ENCODE measurements at regions of chr1 and their contacts with region 1.

Region 1: DNA sequence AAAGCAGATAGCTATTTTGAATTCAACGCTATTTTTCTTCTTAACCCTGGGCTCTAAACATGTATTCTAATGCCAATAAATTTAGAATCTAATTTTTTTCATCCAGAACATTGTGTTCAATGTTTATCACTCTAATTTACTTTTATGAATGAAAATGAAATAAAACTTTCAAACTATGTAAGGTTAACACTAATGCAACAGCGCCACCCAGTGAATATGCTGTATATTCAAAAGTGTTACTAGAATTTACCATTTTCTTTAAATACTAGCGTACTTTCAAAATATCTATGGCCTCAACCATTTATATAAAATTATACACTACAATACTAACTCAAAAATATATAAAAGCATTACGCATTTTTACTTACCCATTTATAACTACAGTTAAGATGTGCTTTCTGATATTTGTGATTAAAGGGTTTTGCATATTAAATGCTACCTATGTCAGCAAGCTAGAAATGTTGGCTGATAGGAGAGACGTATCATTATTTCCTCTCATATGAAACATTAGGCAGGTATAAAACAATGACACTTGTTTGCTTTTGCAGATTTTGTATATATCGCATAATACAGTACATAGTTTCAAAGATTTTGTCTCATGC is 5.9 kb upstream of the NUF2 start:
- DNase-seq: no peak
- H3K4me3 ChIP-seq: no peak overlapping the region
- H3K27ac ChIP-seq: no peak overlapping the region
- H3K4me1 ChIP-seq: no peaks in the 10 kb centered on the region
- H3K27me3 ChIP-seq: no peaks in the 10 kb centered on the region
- CTCF ChIP-seq: peak in 3 of 4 experiments; percentile 68 to 74 (median 73)
- POLR2A ChIP-seq: no peak

Region 2: DNA sequence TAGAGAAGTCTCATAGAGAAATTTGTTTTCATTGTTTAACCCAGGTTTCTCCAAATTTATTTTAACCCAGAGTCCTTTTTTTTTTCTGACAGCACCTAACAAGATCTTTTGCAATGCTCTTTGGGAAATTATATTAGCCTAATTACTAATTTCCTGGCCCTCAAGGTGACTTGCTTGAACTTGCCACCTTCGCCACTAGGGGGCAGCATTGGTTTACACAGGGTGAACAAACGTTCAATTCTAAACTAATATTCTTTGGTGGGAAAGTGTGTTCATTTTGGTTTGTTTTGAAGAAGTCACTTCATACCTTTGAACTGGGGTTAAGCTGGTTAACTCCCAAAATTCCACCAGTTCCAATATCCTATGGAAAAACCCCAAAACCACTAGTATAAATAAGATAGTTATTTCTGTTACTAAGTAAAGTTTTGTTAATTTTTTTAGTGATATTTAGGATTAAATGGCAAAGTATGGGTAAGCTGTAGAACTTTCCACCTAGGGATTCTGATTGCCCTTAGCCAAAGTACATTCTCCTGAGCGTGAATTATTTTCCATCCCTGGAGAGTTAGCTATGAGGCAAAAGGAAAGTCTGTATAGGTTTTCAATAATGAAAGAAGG is 467.9 kb before region 1 on chr1:
- intact Hi-C with region 1: loop called (anchors 2 kb)
- DNase-seq: peak; percentile 61
- H3K4me3 ChIP-seq: no peak overlapping the region
- H3K27ac ChIP-seq: no peak overlapping the region
- H3K4me1 ChIP-seq: no peaks in the 10 kb centered on the region
- H3K27me3 ChIP-seq: no peaks in the 10 kb centered on the region
- CTCF ChIP-seq: peak; percentile 73 to 94 (median 82)
- POLR2A ChIP-seq: no peak

Region 3: GRCh38 chr1:163174524-163175437 is 141.1 kb before region 1 on chr1:
- intact Hi-C with region 1: loop called (anchors 5 kb)
- DNase-seq: peak; percentile 43
- H3K4me3 ChIP-seq: no peak overlapping the region
- H3K27ac ChIP-seq: no peak overlapping the region
- H3K4me1 ChIP-seq: no peaks in the 10 kb centered on the region
- H3K27me3 ChIP-seq: no peaks in the 10 kb centered on the region
- CTCF ChIP-seq: peak; percentile 55 to 80 (median 70)
- POLR2A ChIP-seq: no peak

Region 4: DNA sequence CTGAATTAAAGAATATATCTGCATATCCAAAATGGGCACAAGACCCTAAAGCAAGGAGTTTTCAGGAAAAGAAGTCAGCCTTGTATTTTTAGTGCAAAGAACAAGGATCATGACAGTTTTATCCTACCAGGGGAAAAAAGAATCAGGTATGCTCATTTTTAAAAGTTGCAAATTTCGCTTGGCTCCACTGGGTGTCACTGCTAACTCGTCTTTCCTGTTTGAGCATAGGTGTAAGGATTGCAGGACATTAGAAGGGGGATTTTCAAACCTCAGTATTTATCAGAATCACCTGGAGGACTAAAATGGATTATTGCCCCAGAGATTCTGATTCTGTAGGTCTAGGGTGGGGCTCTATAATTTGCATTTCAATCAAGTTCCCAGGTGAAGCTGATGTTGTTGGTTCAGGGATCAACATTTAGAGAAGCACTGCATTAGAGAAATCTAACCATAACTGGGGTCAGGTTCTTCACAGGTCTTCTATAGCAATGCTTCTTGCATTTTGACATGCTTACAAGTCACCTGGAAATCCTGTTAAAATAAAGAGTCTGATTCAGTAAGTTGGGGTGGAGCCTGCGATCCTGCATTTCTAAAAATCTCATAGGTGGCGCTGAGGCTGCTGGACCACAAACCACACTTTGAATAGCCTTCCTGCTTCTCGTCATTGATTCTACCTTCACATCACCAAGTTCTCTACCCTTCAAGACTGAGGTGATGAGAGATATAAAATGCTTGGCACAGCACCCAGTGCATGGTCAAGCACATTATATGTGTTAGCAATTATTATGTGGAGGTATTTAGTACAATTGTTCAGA is 45.5 kb after region 1 on chr1:
- intact Hi-C with region 1: no loop called
- DNase-seq: no peak
- H3K4me3 ChIP-seq: no peak overlapping the region
- H3K27ac ChIP-seq: no peak overlapping the region
- H3K4me1 ChIP-seq: no peaks in the 10 kb centered on the region
- H3K27me3 ChIP-seq: no peaks in the 10 kb centered on the region
- CTCF ChIP-seq: peak in 3 of 4 experiments; percentile 8 to 29 (median 17)
- POLR2A ChIP-seq: no peak

Region 5: DNA sequence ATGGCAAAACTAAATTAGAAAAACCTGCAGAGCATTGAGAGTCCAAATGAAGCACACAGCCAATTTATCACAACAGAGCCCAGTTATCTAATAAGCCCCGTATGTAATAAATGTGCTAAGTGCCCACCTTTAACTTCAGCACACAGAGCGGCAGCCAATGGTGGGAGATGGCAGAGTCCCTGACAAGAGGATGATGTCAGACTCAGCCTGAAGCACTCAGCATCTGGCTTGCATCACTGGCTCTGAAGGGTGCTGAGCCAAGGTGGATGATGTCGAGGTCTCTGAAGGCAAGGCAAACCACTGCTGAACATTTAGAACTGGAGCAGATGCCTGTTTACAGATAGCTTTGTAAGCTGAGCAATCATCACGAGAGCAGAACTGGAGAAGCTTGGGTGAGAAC is 124.2 kb after region 1 on chr1:
- intact Hi-C with region 1: no loop called
- DNase-seq: no peak
- H3K4me3 ChIP-seq: no peak overlapping the region
- H3K27ac ChIP-seq: no peak overlapping the region
- H3K4me1 ChIP-seq: no peaks in the 10 kb centered on the region
- H3K27me3 ChIP-seq: no peaks in the 10 kb centered on the region
- CTCF ChIP-seq: no peak
- POLR2A ChIP-seq: no peak